ENCODE measurements at regions of chr12 and their contacts with region 1.

Region 1: DNA sequence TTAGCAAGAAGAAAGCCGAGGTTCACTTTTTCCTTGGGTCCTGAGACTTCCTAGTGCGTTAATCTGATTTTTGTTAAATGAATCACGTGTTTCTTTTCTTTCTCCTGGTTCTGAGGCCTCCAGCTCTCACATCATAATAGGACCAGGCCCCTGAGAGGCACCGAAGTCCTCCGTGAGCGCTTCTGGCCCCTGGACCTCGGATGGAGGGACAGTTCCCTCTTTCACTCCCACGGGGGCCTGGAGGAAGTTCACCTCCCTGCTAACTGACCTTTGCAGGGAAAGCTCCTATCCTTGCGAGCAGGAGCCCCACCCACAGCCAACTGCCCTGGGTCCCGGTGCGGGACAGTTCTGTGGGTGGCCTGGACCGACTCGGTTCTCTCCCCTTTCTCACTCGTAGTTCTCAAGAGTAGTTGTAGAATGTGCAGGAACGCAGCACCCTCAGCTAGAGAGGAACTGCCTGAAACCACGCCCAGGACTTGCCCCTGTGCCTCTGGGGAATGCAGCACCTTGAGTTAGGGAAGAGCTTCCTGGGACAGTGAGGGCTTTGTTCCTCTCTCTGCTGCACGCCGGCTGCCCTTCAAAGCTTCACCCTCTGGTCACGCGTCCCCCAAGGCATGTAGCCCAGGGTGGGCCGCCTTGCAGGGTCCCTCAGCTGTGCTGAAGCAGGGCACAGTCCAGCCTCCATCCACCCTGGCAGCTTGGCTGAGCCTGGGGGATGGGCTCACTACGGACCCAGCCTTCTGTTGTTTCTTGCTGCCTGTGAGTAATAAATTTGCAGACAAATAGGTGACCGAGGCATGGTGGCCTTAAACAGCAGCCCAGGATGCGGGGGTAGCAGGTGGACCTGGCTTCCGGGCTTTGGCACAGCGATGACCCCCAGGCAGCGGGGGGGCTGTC is 264.6 kb downstream of the ADGRD1 start:
- DNase-seq: peak in 3 of 4 experiments; percentile 14 to 40 (median 30)
- ATAC-seq: peak; percentile 63
- H3K4me3 ChIP-seq: no peak overlapping the region
- H3K27ac ChIP-seq: no peak overlapping the region
- H3K4me1 ChIP-seq: peaks cover 18 to 45% of the 10 kb centered on the region in 2 experiments
- H3K27me3 ChIP-seq: no peaks in the 10 kb centered on the region; a peak in 1 of 5 replicates
- CTCF ChIP-seq: no peak
- EP300 ChIP-seq: no peak
- POLR2A ChIP-seq: no peak
- RAD21 ChIP-seq: no peak

Region 2: DNA sequence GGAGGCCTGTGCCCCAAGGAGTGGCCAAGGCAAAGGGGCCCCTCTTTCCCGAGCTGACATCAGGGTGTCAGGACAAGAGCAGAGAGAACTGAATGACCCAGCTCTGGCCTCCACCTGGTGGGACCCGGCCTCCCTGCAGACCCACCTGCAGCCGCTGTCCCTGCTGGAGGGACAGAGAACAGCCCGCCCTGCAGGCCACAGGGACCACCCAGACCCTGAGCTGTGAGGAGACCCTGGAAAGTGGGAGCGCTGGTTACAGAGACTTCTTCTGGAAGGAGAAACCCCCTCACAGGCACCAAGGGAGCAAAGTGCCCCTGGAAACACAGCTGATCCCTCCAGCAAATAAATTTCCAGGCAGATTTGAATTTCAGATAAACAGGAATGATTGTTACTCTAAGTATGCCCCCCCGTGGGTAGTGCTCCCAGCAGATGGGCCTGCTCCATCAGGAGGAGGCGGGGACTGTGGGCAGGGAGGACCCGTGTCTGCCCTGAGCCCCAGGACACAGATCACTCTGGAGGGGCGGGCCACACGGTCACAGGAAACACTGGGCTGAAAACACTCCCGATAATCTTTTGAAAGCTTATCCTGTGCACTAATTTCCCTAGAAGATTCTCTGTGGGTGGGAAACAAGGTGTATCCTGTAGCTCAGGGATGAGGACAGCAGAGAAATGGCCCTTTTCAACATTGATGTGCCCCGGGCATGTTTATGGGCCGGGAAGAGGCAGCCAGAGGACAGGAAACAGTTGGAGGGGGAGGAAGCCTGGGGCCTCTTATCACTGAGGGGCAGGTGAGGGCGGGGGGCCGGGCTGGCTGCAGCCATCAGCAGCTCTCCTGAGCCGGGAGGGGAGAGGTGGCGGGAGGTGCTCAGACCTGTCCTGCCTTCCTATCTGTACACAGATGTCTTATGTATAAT is 11.4 kb after region 1 on chr12:
- CTCF ChIA-PET with region 1: no interaction called
- POLR2A ChIA-PET with region 1: interaction called, 10 read pairs
- in situ Hi-C with region 1: no loop called
- intact Hi-C with region 1: no loop called
- DNase-seq: peak; percentile 81 to 93 (median 86)
- ATAC-seq: peak; percentile 85
- H3K4me3 ChIP-seq: peak overlapping the region; percentile 23
- H3K27ac ChIP-seq: peak overlapping the region; percentile 93
- H3K4me1 ChIP-seq: peaks cover 40 to 55% of the 10 kb centered on the region in 2 experiments
- H3K27me3 ChIP-seq: no peaks in the 10 kb centered on the region
- CTCF ChIP-seq: peak; percentile 1 to 55 (median 15); a peak in 3 of 6 replicates
- EP300 ChIP-seq: peak; percentile 86
- POLR2A ChIP-seq: peak; percentile 71
- RAD21 ChIP-seq: no peak